CD14-positive monocyte (primary cell): ENCODE measurements at regions of chr6 and their contacts with region 1.

Region 1: GRCh38 chr6:150891888-150892485 is 26.5 kb downstream of the MTHFD1L start:
- DNase-seq: peak; percentile 24 to 48 (median 42)
- H3K4me3 ChIP-seq: no peak overlapping the region
- H3K4me3 Mint-ChIP-seq: no peak overlapping the region
- H3K27ac ChIP-seq: no peak overlapping the region
- H3K27ac Mint-ChIP-seq: no peak overlapping the region
- H3K4me1 ChIP-seq: no peaks in the 10 kb centered on the region
- H3K4me1 Mint-ChIP-seq: peaks cover 8% of the 10 kb centered on the region
- H3K27me3 ChIP-seq: no peaks in the 10 kb centered on the region
- H3K27me3 Mint-ChIP-seq: peaks cover 0 to 1% (median 0%) of the 10 kb centered on the region in 3 donors
- CTCF ChIP-seq: peak; percentile 92

Region 2: DNA sequence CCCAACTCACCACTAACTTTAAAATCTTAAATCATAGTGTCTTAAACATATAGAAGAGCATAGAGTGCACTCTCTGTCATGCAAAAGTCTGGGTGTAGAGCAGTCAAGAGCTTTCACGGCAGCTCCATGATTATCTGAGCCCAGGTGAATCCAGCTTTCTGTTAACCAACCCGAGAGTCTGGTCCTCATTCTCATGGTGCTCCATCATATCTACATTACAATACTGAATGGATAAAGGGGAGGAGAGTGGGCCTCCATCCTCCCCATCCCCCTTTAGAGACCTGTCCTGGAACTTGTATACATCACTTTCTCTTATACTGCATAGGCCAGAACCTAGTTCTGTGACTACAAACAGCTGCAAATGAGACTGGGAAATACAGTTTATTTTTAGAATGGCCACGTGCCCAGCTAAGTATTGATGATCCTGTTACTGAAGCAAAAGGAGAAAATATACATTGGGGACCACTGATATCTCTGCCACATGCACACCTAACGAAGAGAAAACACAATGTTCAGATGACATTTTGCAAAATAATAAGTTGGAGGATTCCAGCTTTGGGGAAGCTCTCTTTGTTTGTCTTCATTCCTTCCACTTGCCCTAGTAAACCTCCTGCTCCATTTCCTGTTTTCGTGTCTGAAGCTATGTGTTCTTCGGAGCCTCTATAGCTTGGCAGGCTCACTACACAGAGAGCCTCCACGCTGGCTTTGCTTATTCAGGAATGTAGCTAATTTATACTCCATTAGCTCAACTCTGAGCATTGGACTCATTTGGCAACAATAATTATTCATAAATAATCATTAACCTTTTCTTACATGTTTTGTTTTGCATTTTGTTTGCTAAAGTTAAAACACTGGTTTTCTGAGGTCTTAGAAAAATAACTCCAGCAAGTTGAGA is 413.1 kb before region 1 on chr6:
- intact Hi-C with region 1: no loop called
- DNase-seq: no peak
- H3K4me3 ChIP-seq: no peak overlapping the region
- H3K4me3 Mint-ChIP-seq: no peak overlapping the region
- H3K27ac ChIP-seq: no peak overlapping the region
- H3K27ac Mint-ChIP-seq: no peak overlapping the region
- H3K4me1 ChIP-seq: no peaks in the 10 kb centered on the region
- H3K4me1 Mint-ChIP-seq: no peaks in the 10 kb centered on the region
- H3K27me3 ChIP-seq: no peaks in the 10 kb centered on the region
- H3K27me3 Mint-ChIP-seq: peaks cover 0 to 9% (median 2%) of the 10 kb centered on the region in 3 donors
- CTCF ChIP-seq: no peak

Region 3: DNA sequence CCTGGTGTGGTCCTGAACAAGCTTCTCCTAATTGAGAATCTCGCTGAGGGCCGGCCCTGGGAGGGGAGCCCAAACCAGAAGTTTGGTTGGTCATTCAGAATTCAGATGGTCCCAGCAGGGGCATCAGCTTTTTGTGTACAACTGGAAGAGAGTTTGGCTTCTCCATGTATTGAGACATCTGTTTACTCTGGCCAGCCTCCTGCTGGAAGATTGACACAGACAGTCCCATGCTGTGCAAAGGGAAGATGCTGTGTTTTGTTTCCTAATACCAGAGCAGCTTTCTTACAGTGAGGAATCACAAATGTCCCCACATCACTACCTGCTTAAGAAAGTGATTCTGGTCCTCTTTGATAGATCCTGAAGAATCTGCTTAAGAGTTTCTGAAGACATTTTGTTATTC is 194.5 kb before region 1 on chr6:
- intact Hi-C with region 1: no loop called
- DNase-seq: no peak
- H3K4me3 ChIP-seq: no peak overlapping the region
- H3K4me3 Mint-ChIP-seq: peak overlapping the region in 1 of 2 donors; percentile 17
- H3K27ac ChIP-seq: no peak overlapping the region
- H3K27ac Mint-ChIP-seq: no peak overlapping the region
- H3K4me1 ChIP-seq: peaks cover 4 to 10% of the 10 kb centered on the region in 2 donors
- H3K4me1 Mint-ChIP-seq: peaks cover 4% of the 10 kb centered on the region
- H3K27me3 ChIP-seq: peaks cover 0 to 2% of the 10 kb centered on the region in 2 donors
- H3K27me3 Mint-ChIP-seq: peaks cover 5 to 9% (median 7%) of the 10 kb centered on the region in 3 donors
- CTCF ChIP-seq: no peak

Region 4: DNA sequence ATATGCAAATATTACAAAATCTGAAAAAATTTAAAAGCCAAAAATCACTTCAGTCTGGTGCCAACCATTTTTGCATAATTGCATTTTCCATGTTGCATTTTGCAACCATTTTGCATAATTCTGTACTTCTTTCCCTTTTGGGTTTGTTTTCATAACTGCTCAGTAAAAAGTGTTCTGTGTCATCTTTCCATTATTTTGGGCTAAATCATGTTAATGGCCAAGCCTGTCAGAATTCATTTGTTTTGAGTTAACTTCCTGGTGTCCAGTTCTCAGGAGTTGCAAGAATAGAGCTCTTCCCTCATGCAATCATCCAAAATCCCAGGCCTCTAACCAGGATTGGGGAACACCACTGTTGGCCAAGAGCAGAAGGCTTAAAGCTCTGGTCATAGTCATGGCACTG is 107.1 kb after region 1 on chr6:
- intact Hi-C with region 1: loop called in 1 of 2 experiments (anchors 10 kb)
- DNase-seq: no peak
- H3K4me3 ChIP-seq: no peak overlapping the region
- H3K4me3 Mint-ChIP-seq: no peak overlapping the region
- H3K27ac ChIP-seq: no peak overlapping the region
- H3K27ac Mint-ChIP-seq: no peak overlapping the region
- H3K4me1 ChIP-seq: peaks cover 4 to 5% of the 10 kb centered on the region in 2 donors
- H3K4me1 Mint-ChIP-seq: peaks cover 19% of the 10 kb centered on the region
- H3K27me3 ChIP-seq: no peaks in the 10 kb centered on the region
- H3K27me3 Mint-ChIP-seq: peaks cover 0 to 2% (median 0%) of the 10 kb centered on the region in 3 donors
- CTCF ChIP-seq: no peak

Region 5: DNA sequence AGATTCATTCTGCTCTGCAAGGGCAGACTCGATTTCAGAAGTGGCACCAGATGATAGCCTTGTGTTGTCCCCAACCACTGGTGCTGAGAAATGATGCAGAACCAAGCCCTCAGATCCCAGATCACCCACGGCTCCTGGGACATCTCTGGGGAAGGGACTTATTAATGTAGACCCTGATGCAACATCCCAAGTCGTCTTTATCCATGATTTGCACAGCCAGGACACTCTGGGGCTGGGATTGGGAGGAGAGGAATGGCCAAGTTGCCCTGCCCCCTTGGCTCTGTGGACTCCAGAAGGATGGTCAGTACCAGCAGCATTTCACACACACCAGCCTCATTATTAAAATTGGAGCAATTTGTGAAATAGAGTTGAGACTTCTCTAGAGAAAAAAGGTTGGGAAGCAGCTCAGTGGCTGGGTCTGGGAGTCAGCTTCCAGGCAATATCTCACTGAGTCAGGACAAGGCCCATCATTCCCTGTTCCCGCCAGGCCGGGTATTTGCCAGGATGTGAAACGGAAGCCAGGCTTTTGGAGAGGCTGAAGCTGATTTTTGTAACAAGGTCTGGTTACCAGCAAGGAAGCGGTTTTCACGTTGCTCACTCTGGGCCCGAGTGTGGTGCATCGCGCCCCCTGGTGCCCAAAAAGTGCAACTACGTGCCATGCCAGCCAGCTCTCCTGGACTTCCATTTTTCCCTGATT is 432.0 kb after region 1 on chr6:
- intact Hi-C with region 1: loop called (anchors 2 kb)
- DNase-seq: peak; percentile 37 to 65 (median 63)
- H3K4me3 ChIP-seq: no peak overlapping the region
- H3K4me3 Mint-ChIP-seq: peak overlapping the region in 1 of 2 donors; percentile 90
- H3K27ac ChIP-seq: no peak overlapping the region
- H3K27ac Mint-ChIP-seq: no peak overlapping the region
- H3K4me1 ChIP-seq: peaks cover 11 to 12% of the 10 kb centered on the region in 2 donors
- H3K4me1 Mint-ChIP-seq: peaks cover 17% of the 10 kb centered on the region
- H3K27me3 ChIP-seq: peaks cover 25 to 34% of the 10 kb centered on the region in 2 donors
- H3K27me3 Mint-ChIP-seq: peaks cover 48 to 53% (median 51%) of the 10 kb centered on the region in 3 donors
- CTCF ChIP-seq: peak; percentile 97

Region 6: DNA sequence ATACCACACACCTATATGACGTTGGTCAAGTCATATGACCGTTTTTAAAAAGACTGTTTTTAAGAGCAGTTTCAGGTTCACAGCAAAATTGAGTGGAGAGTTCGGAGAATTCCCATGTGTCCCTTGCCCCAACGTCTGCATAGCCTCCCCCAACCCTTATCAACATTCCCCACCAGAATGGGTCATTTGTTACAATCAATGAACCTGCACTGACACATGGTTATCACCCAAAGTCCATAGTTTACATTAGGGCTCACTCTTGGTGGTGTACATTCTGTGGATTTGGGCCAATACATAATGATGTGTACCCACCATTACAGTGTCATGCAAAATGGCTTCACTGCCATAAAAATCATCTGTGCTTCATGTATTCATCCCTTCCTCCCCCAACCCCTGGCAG is 447.4 kb after region 1 on chr6:
- intact Hi-C with region 1: loop called in 1 of 2 experiments (anchors 5 kb)
- DNase-seq: no peak
- H3K4me3 ChIP-seq: no peak overlapping the region
- H3K4me3 Mint-ChIP-seq: no peak overlapping the region
- H3K27ac ChIP-seq: no peak overlapping the region
- H3K27ac Mint-ChIP-seq: peak overlapping the region in 1 of 7 donors; percentile 53
- H3K4me1 ChIP-seq: no peaks in the 10 kb centered on the region
- H3K4me1 Mint-ChIP-seq: no peaks in the 10 kb centered on the region
- H3K27me3 ChIP-seq: no peaks in the 10 kb centered on the region
- H3K27me3 Mint-ChIP-seq: peaks cover 0 to 10% (median 4%) of the 10 kb centered on the region in 3 donors
- CTCF ChIP-seq: no peak